GM18951 (cell line): ENCODE measurements at regions of chr18 and their contacts with region 1.

Region 1: DNA sequence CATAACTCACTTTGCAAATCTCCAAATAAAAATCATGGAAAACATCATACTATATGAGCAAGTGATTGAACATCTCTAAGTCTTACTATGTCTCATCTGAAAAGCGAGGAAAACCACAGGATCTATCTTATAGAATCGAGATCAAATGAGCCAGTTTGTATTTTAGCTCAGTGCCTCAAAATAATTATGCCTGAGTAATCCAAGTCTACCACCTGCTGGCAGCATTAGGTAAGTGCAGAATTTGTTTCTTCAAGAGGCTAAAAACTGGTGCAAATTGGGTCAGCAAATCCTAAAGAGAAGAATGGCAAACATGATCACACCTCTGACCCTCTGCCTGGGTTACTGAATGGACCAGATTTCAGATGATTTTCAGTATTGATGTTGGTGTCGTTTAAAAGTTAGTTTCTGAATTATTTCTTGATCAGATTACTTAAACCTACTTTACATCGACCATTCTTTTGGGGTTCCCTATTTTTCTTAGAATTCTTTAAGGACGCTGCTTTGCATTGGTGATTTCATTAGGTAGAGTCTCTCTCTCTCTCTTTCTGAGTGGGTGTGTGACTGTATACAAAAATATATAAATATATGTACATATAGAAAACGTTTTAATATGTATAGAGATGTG is 12.7 kb upstream of the FHOD3 start:
- POLR2A ChIP-seq: no peak

Region 2: DNA sequence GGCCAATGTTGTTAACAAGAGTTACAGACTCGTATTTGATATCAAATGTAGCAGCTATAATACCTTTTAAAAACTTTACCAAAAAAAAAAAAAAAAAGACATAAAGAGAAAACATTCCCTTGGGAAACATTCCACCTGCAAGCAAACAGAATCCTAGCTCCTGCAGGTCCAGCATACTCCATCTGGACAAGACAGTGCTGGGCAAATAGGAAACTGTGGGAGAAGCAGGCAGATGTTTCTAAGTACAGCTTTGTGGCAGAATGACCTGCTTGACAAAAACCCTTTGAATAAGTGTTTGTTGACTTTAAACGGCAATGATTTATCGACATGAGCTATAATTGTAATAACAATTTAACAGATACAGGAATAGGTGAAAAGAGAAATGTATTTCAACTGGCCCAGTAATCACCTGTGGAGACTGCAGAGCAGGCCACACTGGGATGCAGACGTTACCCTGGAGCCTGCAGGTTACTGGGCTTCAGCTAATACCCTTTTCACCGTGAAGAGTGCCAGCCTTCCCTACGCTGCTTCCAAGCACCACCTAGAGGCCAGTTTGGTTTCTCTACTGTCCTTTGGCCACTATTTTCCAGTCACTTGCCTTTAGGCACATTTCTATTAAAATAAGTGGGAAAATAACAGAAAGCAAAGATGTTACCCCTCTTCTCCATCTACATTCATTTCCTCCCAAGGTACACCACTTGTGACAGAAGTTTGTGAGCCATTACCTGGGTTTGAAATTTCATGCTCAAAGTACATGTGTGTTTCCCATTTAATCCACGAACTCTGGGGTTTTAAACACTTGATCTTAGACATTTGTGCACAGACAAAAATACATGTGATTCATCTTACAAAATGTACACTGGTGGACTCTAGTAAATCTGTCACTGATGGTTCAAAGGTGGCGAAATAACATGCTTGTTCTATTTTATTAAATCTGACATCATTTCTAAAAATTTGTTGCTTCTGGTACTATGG is 1140.9 kb before region 1 on chr18:
- in situ Hi-C with region 1: no loop called
- POLR2A ChIP-seq: no peak

Region 3: GRCh38 chr18:36015629-36016028 is 269.2 kb before region 1 on chr18:
- in situ Hi-C with region 1: loop called (anchors 10 kb)
- POLR2A ChIP-seq: no peak

Region 4: DNA sequence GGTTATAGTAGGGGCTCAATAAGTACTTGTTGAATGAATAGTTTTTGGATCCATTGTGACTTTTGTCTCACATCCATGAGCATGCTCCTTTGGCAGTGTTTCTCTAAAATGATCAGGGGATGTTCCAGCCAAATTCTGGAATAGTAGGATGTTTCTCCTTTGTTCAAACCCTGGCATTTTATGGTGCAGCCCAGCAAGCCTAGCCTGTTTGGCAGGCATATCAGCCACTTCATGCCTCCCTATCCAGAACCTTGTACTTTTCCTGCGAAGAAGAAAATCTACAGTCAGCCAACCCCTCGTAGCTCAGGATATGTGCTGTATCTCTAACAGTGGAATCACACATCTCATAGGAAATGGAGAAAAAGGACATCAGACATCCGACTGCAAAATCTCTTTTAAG is 190.4 kb before region 1 on chr18:
- in situ Hi-C with region 1: loop called (anchors 5 kb)
- POLR2A ChIP-seq: no peak